ENCODE measurements at regions of chr3 and their contacts with region 1.

Region 1: GRCh38 chr3:151282921-151283320 is 4.6 kb upstream of the P2RY14 start:
- DNase-seq: no peak
- ATAC-seq: peak; percentile 64

Region 2: DNA sequence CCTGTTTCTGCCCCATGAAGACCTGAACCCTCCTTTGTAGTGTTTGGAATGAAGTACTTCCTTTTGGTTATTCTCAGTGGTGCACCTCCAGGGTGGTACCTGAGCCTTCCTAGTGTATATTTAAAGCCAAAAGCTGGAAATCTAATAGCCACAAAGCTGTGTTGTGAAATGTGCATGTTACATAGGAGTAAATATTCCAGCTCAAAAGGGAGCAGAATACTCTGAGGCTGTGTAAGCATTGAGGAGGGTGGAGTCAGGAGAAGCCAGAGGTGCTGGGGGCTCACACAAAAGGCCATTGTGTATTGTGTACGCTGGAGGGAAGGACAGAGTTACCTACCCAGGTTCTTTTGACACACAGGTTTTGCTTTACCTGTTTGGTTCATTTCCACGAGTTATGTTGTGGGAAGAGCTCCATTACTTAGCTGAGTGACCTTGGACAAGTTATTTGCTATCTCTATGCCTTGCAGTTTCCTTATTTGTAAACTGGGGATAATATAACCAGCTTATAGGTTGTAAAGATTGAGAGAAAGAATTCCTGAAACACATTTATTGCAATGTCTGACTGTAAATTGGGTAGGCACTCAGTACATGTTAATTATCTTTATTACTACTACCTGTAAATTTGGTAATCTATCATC is 104.6 kb before region 1 on chr3:
- intact Hi-C with region 1: no loop called
- DNase-seq: no peak
- ATAC-seq: no peak

Region 3: DNA sequence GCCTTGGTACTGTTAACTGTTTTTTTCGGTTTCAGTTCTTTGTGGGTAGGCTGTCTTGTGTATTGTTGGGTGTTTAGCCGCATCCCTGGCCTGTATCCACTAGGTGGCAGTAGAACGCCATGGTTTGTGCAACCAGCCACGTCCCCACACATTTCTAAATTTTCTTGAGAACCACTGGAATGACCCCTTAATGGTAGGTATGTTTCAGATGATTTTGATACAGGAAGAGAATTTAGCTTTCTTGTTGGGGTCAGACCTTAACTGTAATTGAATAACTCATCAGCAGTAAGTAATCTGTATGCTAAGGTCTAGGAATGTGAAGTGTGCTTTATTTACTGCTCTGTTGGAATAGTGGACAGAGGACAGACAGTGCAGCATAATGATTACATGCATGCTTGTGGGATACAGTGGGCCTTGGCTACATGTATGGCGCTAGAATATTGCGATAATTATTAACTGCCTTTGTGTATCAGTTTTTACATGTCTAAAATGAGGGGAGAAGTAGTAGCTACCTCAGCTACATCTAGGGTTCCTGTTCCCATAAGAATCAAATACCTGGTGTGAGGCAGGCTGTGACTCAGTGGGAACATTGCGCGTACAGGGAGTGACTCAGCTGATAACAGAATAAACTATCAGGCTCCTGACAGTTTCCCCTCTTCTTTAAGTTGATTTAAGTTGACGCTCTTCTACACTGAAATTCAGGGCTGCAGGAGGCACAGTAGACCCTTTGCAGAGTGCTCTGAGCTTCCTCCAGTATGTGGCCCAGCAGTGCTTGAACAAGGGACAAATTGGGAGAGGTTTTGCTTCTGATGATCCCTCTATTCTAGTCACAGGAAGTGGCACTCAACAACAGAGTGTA is 54.9 kb before region 1 on chr3:
- intact Hi-C with region 1: loop called (anchors 2 kb)
- DNase-seq: peak; percentile 73
- ATAC-seq: peak; percentile 92